Right lobe of liver (tissue), 6 donors: ENCODE measurements at regions of chr18 and their contacts with region 1.

Region 1: GRCh38 chr18:26548429-26549262 is at the start of gene KCTD1:
- DNase-seq: peak; percentile 83 to 89 (median 88)
- ATAC-seq: peak; percentile 70 to 86 (median 81)
- H3K4me3 ChIP-seq: peak within 1 kb of the TSS; percentile 45 to 66 (median 59)
- H3K27ac ChIP-seq: peak within 1 kb of the TSS in 2 of 3 donors; percentile 4 to 29
- H3K4me1 ChIP-seq: peaks cover 0 to 51% (median 0%) of the 10 kb centered on the region in 4 donors
- H3K27me3 ChIP-seq: peaks cover 0 to 7% of the 10 kb centered on the region in 2 donors
- CTCF ChIP-seq: no peak
- POLR2A ChIP-seq: no peak
- total RNA-seq, gene KCTD1: 2.9 to 6.8 (median 4.8) TPM

Region 2: GRCh38 chr18:26487437-26487836 is 61.2 kb before region 1 on chr18:
- intact Hi-C with region 1: loop called in 1 of 2 experiments (anchors 10 kb)
- DNase-seq: no peak
- ATAC-seq: peak in 1 of 4 donors; percentile 38
- H3K4me3 ChIP-seq: no peak overlapping the region
- H3K27ac ChIP-seq: no peak overlapping the region
- H3K4me1 ChIP-seq: no peaks in the 10 kb centered on the region
- H3K27me3 ChIP-seq: no peaks in the 10 kb centered on the region
- CTCF ChIP-seq: no peak
- POLR2A ChIP-seq: no peak